Aorta (tissue), 5 donors: ENCODE measurements at regions of chr1 and their contacts with region 1.

Region 1: DNA sequence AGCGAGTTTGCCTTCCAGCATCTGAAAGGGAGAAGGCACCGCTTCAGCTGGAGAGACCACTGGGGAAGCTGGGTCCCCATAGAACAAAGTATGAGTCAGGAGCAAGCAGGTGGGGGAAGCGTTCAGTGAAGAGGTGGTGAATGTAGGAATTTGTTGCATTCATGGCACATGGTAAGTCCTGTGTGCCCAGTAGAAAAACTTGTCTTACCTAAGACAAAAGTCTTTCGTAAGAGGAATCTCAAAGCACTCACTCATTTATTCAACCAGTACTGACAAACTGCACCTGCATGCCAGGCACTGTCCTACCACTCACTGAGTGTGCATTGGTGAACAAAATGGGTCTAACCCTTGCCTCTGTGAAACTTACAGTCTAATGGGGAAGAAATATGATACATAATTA is 9.2 kb upstream of the ERRFI1 start:
- DNase-seq: no peak
- ATAC-seq: no peak
- H3K4me3 ChIP-seq: no peak overlapping the region
- H3K27ac ChIP-seq: no peak overlapping the region
- H3K4me1 ChIP-seq: peaks cover 0 to 2% of the 10 kb centered on the region in 2 donors
- H3K27me3 ChIP-seq: no peaks in the 10 kb centered on the region

Region 2: DNA sequence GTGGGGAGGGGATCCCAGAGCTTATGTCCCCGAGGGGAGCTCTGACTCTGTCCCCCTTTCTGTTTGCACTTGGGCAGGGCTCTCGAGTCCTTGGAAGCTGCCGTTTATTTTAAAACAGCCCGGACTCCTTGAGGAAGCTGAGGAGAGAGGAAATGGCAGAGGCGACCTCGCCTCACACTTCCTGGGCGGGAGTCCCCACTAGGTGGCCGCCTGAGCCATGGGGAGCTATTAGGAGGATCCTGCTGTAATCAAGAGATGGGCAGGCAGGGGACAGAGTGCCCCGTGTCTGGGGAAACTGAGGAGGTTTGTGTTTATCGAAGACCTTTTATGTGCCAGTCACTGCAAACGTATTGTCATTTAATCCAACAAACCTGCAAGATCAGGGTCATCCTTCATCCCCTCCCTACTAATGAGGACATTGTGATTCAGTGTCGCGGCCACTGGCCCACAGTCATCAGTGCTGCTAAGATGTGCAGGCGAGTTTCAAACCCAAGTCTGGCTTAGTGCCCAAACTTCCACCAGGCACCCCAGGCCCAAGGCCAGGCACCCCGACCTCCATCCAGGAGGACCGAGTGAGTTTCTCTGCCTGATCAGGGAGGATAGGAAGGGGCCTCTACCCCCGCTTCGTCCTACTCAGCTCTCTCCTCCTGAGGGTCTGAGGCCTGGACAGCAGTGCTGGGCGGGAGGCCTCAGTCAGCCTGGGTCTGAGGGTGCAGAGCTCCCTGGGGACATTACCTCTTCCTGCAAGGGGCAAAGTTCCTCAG is 581.1 kb before region 1 on chr1:
- intact Hi-C with region 1: no loop called
- DNase-seq: no peak
- ATAC-seq: no peak
- H3K4me3 ChIP-seq: no peak overlapping the region
- H3K27ac ChIP-seq: no peak overlapping the region
- H3K4me1 ChIP-seq: no peaks in the 10 kb centered on the region
- H3K27me3 ChIP-seq: no peaks in the 10 kb centered on the region

Region 3: DNA sequence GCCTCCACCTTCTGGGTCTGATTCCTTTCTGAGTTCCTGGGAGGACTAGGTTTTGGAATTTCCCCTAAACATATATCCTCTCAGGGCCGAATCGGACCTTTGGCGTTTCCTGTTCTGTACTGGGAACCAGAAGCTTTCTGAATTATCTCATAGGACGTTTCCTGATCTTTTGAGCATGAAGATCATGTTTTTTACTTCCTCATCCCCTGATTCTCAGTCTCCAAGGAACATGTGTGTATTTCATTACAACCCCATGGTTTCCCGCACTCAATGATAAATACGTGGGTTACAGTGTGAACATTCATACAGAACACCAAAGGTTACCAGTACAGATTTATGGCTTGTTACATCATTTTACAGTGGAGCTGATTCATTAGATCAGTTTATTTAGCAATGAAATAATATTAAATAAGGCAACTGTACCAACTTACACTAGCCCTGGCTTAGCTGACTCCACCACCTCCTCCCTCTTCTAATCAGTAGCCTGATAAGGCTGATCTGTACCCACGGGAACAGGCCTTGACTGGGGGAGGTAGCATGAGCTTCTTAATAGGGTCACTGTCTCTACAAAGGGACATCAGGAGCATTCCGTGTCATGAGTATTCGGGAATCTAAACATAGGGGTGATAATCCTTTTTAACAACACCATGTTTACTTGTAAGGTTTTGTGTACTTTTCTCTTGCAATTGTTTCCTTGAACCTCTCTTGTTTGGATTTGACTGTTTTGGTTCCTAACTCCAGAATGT is 48.6 kb after region 1 on chr1:
- intact Hi-C with region 1: loop called in 1 of 2 experiments (anchors 5 kb)
- DNase-seq: no peak
- ATAC-seq: peak; percentile 7
- H3K4me3 ChIP-seq: no peak overlapping the region
- H3K27ac ChIP-seq: no peak overlapping the region
- H3K4me1 ChIP-seq: peaks cover 3 to 6% of the 10 kb centered on the region in 2 donors
- H3K27me3 ChIP-seq: no peaks in the 10 kb centered on the region